ENCODE measurements at regions of chr13 and their contacts with region 1.

Region 1: DNA sequence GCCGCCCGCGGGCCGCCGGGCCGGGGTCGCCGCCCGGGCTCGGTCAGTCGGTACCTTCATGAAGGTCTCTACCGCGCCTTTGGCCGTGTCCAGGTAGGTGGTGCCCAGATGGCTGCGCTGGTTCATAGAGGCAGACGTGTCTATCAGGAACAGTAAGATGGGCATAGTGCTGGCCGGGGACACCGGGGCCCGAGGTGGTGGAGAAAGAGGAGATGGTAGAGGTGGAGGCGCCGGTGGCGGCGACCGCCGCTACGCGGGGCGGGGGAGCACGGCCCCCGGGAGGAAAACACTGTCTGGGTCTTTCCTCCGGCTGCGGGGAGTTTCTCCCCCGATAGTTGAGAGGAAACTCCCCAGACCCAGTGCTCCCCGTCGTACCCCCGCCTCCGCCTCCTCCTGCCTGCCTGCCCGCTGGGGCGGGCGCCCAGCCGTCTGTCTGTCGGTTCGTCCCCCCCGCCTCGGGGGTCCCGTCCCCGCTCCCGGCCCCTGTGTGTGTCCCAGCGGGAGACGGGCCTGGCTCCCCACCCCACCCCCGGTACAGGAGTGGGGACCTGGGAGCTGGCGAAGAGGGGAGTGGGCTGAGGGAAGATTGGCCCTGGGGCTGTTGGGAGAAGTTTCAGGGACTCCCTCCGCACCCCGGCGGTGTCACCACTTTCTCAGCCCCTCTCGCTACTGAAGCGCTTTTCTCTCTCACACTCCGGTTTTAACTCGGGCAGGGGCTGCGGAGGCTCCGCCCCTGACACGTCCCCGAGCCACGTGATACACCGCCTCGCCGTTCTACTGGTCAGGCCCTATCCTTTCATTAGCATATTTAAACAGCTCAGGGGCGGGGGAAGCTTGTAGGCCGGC is at the start of gene INTS6:
- DNase-seq: peak; percentile 99
- ATAC-seq: peak; percentile 88
- H3K4me3 ChIP-seq: peak within 1 kb of the TSS; percentile 91
- H3K27ac ChIP-seq: peak within 1 kb of the TSS; percentile 98
- H3K4me1 ChIP-seq: peaks cover 2% of the 10 kb centered on the region; the same call in 1 of the 2 replicates
- H3K27me3 ChIP-seq: no peaks in the 10 kb centered on the region
- CTCF ChIP-seq: no peak
- POLR2A ChIP-seq: peak; percentile 100
- RAD21 ChIP-seq: peak; percentile 30
- total RNA-seq, gene INTS6: 42.3 and 43.0 TPM in 2 replicates

Region 2: GRCh38 chr13:51583875-51584730 is 131.5 kb after region 1 on chr13 and contains the start of gene WDFY2:
- CTCF ChIA-PET with region 1: no interaction called
- POLR2A ChIA-PET with region 1: interaction called, 17 read pairs
- dilution Hi-C with region 1: no loop called
- in situ Hi-C with region 1: loop called (anchors 10 kb)
- intact Hi-C with region 1: loop called (anchors 1 kb)
- DNase-seq: peak; percentile 100
- ATAC-seq: peak; percentile 90
- H3K4me3 ChIP-seq: peak within 1 kb of the TSS; percentile 97
- H3K27ac ChIP-seq: peak within 1 kb of the TSS; percentile 81
- H3K4me1 ChIP-seq: peaks cover 5% of the 10 kb centered on the region
- H3K27me3 ChIP-seq: no peaks in the 10 kb centered on the region
- CTCF ChIP-seq: peak; percentile 31; the same call in 1 of the 2 replicates
- POLR2A ChIP-seq: peak; percentile 92
- RAD21 ChIP-seq: peak; percentile 29
- total RNA-seq, gene WDFY2: 4.3 and 6.7 TPM in 2 replicates

Region 3: DNA sequence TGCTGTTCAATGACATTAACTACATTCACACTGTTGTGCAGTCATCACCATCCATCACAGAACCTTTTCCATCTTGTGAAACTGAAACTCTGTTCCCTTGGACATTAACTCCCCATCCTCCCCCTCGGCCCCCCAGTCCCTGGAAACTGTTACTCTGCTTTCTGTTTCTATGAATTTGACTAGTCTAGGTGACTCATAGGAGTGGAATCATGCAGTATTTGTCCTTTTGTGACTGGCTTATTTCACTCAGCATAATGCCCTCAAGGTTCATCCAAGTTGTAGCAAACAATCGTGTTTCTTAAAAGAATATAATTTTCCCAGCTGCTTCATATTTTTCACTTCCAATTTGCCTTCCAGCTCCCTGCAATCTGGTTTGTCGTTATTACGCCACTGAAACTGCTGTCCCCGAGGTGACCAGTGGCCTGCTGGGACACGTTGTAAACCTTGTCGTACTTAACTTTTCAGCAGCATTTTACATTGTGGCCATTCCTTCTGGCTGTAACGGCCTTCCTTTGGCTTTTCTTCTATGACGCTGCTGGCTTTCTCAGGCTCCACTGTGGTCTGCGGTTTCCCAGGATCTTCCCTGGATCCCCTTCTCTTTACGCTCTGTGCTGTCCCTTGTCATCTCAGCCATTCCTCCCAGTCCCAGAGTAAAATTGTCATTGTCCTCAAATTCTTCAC is 277.4 kb after region 1 on chr13:
- CTCF ChIA-PET with region 1: no interaction called
- POLR2A ChIA-PET with region 1: interaction called, 3 read pairs
- dilution Hi-C with region 1: no loop called
- in situ Hi-C with region 1: loop called (anchors 10 kb)
- intact Hi-C with region 1: loop called (anchors 2 kb)
- DNase-seq: peak; percentile 90
- ATAC-seq: peak; percentile 78
- H3K4me3 ChIP-seq: peak overlapping the region; percentile 11; the same call in 1 of the 2 replicates
- H3K27ac ChIP-seq: peak overlapping the region; percentile 88
- H3K4me1 ChIP-seq: peaks cover 34% of the 10 kb centered on the region
- H3K27me3 ChIP-seq: no peaks in the 10 kb centered on the region
- CTCF ChIP-seq: no peak
- POLR2A ChIP-seq: no peak
- RAD21 ChIP-seq: peak; percentile 22

Region 4: DNA sequence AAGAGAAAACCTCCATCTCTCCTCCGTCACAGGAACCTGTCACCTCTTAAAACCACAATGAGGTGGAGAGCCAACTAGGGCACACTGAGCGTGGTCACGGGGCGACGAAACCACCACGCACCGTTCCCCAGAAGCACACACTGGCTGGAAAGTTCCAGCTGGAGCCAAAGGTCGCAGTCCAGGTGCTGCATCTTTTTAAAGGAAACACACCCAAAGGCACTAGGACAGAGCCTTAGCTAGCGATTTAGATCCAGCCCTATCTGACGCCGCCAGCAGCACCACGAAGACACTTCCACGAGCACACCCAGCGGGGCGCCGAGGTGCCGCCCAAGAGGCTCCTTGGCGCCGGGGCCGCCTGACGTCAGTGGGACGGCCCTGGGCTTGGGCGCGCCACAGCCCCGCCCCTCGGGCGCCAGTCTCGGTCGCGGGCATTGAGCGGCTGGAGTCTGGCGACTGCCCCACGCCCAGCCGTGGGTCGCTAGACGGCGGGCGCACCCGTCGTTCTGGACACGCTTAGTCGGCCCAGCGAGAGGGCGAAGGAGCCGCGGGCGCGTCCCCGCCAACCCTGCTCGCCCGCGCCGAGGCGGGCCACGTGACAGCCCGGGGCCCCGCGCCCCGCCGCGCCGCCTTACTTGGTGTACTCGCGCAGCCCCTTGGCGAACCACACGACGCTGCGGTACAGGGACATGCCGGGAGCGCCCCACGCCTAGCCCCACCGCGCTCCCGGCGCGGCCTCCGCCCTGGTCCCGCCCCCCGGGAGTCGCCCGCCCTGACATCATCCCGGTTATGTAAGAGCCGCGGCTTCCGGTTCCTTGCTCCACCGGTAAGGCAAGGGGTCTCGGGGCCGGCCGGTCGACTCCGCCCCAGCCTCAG is 351.1 kb after region 1 on chr13 and contains the start of gene DHRS12:
- CTCF ChIA-PET with region 1: no interaction called
- POLR2A ChIA-PET with region 1: interaction called, 7 read pairs
- dilution Hi-C with region 1: no loop called
- in situ Hi-C with region 1: no loop called
- intact Hi-C with region 1: loop called (anchors 5 kb)
- DNase-seq: peak; percentile 66
- ATAC-seq: peak; percentile 96
- H3K4me3 ChIP-seq: peak within 1 kb of the TSS; percentile 84
- H3K27ac ChIP-seq: peak within 1 kb of the TSS; percentile 40; the same call in 1 of the 2 replicates
- H3K4me1 ChIP-seq: peaks cover 4% of the 10 kb centered on the region
- H3K27me3 ChIP-seq: no peaks in the 10 kb centered on the region
- CTCF ChIP-seq: no peak
- POLR2A ChIP-seq: peak; percentile 94
- RAD21 ChIP-seq: peak; percentile 26; the same call in 1 of the 2 replicates
- total RNA-seq, gene DHRS12: 1.3 and 1.9 TPM in 2 replicates